ENCODE measurements at regions of chr20 and their contacts with region 1.

Region 1: DNA sequence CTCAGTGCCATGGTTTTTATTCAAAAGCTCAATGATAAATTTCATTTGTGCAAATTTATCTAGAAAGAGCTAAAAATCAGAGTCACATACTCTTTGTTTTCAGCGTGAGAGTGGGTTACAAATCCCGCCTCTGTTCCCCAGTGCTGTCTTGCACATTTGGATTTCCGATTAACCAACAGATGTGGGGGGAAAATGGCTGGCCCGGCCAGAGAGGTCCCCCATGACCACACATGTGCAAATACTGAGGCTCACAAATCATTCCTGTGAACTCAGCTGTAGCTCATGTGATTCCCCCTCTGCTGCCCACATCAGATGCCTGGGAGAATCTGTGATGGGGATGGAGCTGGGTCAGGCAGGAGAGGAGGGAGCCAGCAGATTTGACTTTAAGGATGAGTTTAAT is 168.7 kb downstream of the PAX1 start:
- DNase-seq: no peak
- H3K4me3 ChIP-seq: no peak overlapping the region
- H3K27ac ChIP-seq: no peak overlapping the region
- H3K4me1 ChIP-seq: no peaks in the 10 kb centered on the region
- H3K27me3 ChIP-seq: no peaks in the 10 kb centered on the region

Region 2: GRCh38 chr20:21812379-21812778 is 61.7 kb before region 1 on chr20:
- in situ Hi-C with region 1: loop called (anchors 10 kb)
- DNase-seq: no peak
- H3K4me3 ChIP-seq: no peak overlapping the region
- H3K27ac ChIP-seq: no peak overlapping the region
- H3K4me1 ChIP-seq: no peaks in the 10 kb centered on the region
- H3K27me3 ChIP-seq: no peaks in the 10 kb centered on the region

Region 3: DNA sequence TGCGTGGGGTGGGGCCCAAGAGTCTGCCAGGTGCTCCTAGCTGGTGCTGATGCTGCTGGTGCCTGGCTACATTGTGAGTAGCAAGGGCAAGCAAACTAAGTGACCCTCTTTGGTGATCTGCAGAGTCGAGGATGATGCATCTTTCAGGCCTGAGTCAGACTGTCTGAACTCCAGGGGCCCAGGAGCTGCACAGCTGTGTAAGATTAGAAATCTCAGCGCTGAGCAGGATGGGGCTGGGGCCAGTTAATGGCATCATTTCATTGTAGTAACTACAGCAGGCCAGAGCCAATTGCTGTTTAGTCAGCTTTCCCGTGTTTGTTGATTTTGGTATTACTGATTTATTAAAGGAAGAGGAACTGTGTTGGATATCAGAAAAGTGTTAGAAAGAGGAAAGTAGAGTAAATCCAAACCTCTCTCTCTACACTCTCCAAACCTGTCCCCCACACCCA is 196.5 kb after region 1 on chr20:
- in situ Hi-C with region 1: no loop called
- DNase-seq: peak; percentile 84
- H3K4me3 ChIP-seq: no peak overlapping the region
- H3K27ac ChIP-seq: no peak overlapping the region
- H3K4me1 ChIP-seq: no peaks in the 10 kb centered on the region
- H3K27me3 ChIP-seq: no peaks in the 10 kb centered on the region

Region 4: DNA sequence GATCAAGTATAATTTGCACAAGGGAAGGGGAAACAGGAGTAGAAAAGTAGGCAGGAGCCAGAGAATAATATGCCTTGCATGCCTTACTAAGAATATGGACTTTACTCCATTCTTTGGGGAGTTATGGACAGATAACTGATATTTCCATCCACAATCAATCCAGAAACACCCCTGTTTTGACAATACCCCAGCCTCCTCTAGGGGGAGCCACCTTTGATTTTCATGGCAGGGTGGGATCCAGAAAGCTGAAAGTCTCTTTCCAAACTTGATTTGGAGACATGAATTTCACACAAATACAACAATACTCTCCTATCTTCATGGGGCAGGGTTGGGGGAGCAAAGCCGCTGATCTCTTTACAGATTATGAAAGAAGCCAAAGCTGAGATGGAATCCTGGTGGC is 306.1 kb after region 1 on chr20:
- in situ Hi-C with region 1: no loop called
- DNase-seq: no peak
- H3K4me3 ChIP-seq: no peak overlapping the region
- H3K27ac ChIP-seq: no peak overlapping the region
- H3K4me1 ChIP-seq: no peaks in the 10 kb centered on the region
- H3K27me3 ChIP-seq: no peaks in the 10 kb centered on the region